Posterior vena cava (tissue), 2 donors: ENCODE measurements at regions of chr11 and their contacts with region 1.

Region 1: GRCh38 chr11:30282289-30282631 is 40.6 kb upstream of the ARL14EP start:
- DNase-seq: peak; percentile 78

Region 2: DNA sequence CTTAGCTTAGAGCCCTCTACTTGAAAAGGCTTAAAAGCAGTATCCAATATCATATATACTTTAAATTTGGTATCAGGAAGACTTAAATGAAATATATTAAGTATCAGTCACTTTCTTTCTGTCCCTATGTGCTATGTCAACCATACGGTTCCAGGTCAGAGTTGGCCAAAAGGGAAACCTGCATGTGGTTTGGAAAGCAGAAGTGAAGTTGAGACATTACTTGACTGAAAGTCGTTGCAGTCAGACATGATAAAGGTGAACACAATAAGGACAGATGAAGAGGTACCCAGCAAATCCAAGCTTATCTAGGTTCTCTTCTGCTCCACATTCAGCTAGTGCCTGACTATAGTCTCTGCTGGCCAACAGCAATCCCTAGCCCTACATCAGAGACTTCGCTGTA is 602.3 kb before region 1 on chr11:
- intact Hi-C with region 1: loop called in 1 of 2 experiments (anchors 5 kb)
- DNase-seq: no peak

Region 3: GRCh38 chr11:30310623-30311022 is 28.4 kb after region 1 on chr11:
- intact Hi-C with region 1: no loop called
- DNase-seq: no peak

Region 4: DNA sequence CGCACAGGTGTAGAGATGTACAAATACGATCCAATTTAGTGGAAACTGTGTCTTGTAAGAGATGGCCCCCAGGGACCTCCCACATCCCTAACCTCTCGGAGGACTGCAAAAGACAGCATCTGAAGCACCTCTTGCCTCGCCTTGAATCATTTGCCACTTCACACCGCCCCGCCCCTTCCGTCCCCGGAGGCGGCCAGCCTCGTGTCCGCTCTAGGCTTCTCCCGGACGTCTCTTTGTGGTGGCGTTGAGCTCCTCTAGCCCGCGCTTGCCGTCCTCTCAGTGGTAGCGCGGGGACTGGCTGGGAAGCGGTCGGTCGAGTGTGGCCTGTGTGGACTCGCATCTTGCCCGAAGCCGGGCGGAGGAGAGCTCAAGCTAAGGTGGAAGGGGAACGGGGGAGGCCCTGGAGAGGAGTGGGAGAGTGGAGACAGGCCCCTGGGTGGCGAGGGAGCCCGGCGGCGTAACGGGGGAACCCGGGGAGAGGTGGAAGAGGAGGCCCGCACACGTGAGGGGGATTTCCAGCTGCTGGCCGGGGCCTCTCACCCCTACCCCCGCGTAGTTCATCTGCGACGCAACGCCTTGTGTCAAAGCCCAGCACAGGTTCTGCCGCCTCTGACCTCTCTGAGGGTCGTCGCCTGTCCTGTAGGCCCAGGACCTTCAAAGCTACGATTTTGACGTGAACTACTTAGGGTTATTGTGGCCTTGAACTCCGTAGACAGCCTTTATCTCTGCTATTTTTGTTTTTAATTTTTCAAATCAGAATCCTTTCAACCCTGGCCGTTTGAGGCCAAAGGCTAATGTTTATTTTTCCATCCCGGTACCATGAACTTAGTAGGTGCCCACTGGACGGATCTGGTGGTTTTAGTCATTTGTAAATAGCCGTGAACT is 40.8 kb after region 1 on chr11 and contains the start of gene ARL14EP:
- intact Hi-C with region 1: no loop called
- DNase-seq: peak; percentile 97
- total RNA-seq, gene ARL14EP: 22.7 to 28.0 TPM